Breast epithelium (tissue), 4 donors: ENCODE measurements at regions of chr7 and their contacts with region 1.

Region 1: GRCh38 chr7:127713758-127714157 is 61.8 kb downstream of the SND1 start:
- DNase-seq: no peak
- H3K4me3 ChIP-seq: no peak overlapping the region
- H3K27ac ChIP-seq: peak overlapping the region; percentile 16 to 23
- H3K4me1 ChIP-seq: no peaks in the 10 kb centered on the region
- H3K27me3 ChIP-seq: no peaks in the 10 kb centered on the region
- CTCF ChIP-seq: no peak
- POLR2A ChIP-seq: no peak

Region 2: DNA sequence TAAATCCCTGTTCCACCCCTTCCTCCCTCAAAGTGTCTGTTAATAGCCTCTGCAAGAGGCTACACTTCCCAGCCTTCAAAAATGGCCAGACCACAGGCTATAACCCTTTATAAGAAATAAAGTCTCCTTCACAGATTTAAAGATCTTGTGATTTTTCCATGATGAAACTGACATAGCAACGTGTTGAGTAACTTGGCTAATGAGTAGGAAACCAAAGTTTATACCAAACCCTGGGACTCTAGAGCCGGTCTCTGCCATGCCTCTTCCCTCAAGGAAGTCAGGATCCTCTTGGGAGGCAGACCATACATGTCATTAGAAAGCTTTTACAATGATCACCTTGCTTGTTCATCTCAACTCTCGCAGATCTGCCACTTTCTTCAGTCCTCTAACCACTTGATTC is 505.4 kb before region 1 on chr7:
- intact Hi-C with region 1: loop called (anchors 5 kb)
- DNase-seq: no peak
- H3K4me3 ChIP-seq: no peak overlapping the region
- H3K27ac ChIP-seq: no peak overlapping the region
- H3K4me1 ChIP-seq: no peaks in the 10 kb centered on the region
- H3K27me3 ChIP-seq: no peaks in the 10 kb centered on the region
- CTCF ChIP-seq: no peak
- POLR2A ChIP-seq: no peak

Region 3: GRCh38 chr7:127726476-127726875 is 12.7 kb after region 1 on chr7:
- intact Hi-C with region 1: no loop called
- DNase-seq: no peak
- H3K4me3 ChIP-seq: no peak overlapping the region
- H3K27ac ChIP-seq: no peak overlapping the region
- H3K4me1 ChIP-seq: no peaks in the 10 kb centered on the region
- H3K27me3 ChIP-seq: no peaks in the 10 kb centered on the region
- CTCF ChIP-seq: no peak
- POLR2A ChIP-seq: no peak

Region 4: DNA sequence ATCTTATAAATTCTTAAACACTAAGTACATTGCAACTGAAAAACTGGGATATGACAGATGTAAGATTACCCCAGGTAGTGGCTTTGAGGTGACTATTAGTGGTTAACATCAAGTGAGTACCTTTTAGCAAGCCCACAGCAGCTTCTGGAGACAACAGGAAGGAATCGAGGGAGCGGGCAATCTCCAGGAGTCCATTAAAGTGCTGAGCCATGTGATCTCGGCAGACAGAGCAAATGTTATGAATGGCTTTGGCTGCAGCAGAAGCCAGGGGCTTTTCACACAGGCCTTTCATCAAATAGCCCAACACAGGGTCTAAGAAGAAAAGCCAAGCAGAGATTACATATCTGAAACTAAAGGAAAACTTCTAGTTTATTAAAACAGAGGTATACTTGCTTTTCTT is 1272.9 kb after region 1 on chr7:
- intact Hi-C with region 1: no loop called
- DNase-seq: no peak
- H3K4me3 ChIP-seq: no peak overlapping the region
- H3K27ac ChIP-seq: no peak overlapping the region
- H3K4me1 ChIP-seq: no peaks in the 10 kb centered on the region
- H3K27me3 ChIP-seq: no peaks in the 10 kb centered on the region
- CTCF ChIP-seq: no peak
- POLR2A ChIP-seq: no peak